ENCODE measurements at regions of chr5 and their contacts with region 1.

Region 1: DNA sequence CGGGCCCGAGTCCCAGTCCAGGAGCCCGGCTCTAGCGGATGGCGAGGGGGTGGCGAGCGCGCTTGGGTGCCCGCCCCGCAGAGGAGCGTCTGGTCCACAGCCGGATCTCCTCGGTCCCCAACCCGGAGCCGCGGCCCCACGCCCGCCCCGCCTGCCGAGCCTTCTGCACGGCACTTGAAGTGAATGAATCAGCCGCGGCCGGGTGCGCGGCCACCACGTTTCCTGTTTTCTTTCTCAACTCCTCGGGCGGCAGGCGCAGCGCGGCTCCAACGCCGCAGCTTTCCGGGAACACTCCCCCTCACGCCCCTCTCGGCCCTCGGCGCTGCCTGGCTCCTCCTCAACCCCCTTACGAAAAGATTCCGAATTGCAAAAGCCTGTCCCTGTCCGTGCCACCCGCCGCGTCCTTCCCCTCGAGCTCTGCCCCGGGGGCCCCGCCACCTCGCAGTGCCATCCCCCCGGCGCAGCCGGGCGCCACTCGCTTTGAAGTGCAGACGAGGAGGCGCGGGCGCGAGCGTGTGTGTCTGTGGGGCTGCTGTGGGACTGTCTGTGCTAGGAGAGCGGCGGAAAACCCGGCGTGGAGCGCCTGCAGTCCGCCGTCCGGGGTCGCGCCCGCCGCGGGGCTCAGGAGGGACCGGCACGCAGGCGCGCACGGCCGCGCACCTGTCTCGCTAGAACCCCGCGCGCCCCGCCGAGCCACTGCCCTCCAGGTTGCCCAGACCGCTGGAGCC is 456.6 kb downstream of the RAB3C start:
- DNase-seq: peak; percentile 86 to 95 (median 93)
- ATAC-seq: peak; percentile 78 to 83
- H3K4me3 Mint-ChIP-seq: peak overlapping the region; percentile 89 to 99 (median 96)
- H3K27ac Mint-ChIP-seq: peak overlapping the region; percentile 96 to 100 (median 99)
- H3K4me1 Mint-ChIP-seq: peaks cover 23 to 62% (median 57%) of the 10 kb centered on the region in 4 donors
- H3K27me3 Mint-ChIP-seq: no peaks in the 10 kb centered on the region

Region 2: GRCh38 chr5:58988938-58989337 is 50.5 kb before region 1 on chr5:
- POLR2A ChIA-PET with region 1: no interaction called
- DNase-seq: no peak
- ATAC-seq: no peak
- H3K4me3 Mint-ChIP-seq: no peak overlapping the region
- H3K27ac Mint-ChIP-seq: no peak overlapping the region
- H3K4me1 Mint-ChIP-seq: peaks cover 0 to 2% (median 0%) of the 10 kb centered on the region in 4 donors
- H3K27me3 Mint-ChIP-seq: no peaks in the 10 kb centered on the region

Region 3: DNA sequence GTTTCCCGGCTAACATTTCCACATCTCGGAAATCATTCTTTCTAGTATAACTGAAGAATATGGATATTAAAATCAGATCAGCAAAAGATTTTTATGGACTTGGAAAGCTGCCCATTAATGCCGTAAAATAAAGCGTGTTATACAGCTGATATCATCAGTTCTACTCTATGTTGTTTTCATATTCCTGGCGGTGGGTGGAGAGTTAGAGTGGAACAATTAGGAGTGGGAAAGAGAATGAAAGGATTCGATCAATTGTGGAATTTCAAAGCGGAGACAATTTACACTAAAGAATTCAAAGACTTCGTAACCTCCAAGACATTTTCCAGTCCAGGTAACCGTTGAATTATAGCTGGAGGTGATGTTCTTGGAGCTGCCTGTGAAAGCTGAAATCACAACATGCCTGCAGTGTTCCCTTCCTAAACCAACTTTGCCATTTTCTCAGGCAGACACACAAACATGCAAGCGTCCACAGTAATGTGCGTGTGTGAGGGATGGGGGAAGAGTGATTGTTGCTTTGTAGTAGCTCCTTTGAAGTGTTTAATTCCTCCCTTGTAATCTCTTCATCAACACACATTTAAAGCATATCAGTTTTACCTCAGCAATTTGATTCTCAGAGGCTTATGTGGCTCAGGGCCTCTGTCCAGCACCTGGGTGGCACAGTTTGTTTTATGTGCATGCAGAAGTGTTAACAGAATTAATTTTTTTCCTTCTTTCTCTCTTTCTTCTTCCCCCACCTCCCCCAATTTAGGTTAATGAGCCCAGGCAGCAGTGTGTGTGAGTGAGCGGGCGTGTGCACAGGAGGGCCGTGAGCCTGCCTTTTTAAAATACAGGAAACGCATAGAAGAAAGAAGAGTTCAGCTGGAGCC is 87.5 kb after region 1 on chr5:
- POLR2A ChIA-PET with region 1: interaction called, 104 read pairs
- DNase-seq: peak in 3 of 10 donors; percentile 26 to 37 (median 29)
- ATAC-seq: peak in 1 of 2 donors; percentile 7
- H3K4me3 Mint-ChIP-seq: no peak overlapping the region
- H3K27ac Mint-ChIP-seq: no peak overlapping the region
- H3K4me1 Mint-ChIP-seq: peaks cover 7 to 14% (median 10%) of the 10 kb centered on the region in 4 donors
- H3K27me3 Mint-ChIP-seq: no peaks in the 10 kb centered on the region

Region 4: DNA sequence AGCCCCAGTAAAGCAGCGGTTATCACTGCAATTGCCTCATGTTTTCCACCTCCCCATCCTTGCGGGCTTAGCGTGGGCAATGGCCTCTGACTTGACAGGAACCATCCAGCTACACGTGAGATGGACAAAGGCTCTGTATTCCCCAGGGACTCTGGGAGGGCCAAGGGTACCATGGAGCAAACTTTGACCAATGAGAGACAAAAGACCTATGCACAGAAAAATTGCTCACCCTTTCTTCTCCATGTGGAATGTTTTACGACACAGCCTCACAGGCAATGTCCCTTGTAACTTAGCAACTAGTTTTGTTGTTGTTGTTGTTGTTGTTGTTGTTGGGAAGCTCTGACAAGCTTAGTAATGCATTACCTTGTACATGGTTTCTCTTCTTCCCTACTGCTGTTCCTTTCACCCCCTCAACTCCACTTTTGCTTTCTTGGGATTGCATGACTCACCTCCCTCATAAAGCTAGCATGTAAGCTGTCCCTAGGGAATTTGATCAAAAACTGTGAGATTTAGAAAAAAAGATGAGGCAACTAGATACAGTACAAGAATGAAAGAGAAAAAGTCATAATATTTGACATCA is 94.3 kb after region 1 on chr5:
- POLR2A ChIA-PET with region 1: interaction called, 104 read pairs
- DNase-seq: no peak
- ATAC-seq: no peak
- H3K4me3 Mint-ChIP-seq: no peak overlapping the region
- H3K27ac Mint-ChIP-seq: peak overlapping the region in 4 of 10 donors; percentile 35 to 72 (median 64)
- H3K4me1 Mint-ChIP-seq: peaks cover 7 to 28% (median 25%) of the 10 kb centered on the region in 4 donors
- H3K27me3 Mint-ChIP-seq: no peaks in the 10 kb centered on the region

Measured in naive thymus-derived CD8-positive, alpha-beta T cell (primary cell).